ENCODE measurements at regions of chr5 and their contacts with region 1.

Region 1: GRCh38 chr5:172984243-172984953 is 827 bp downstream of the ATP6V0E1 start:
- DNase-seq: peak; percentile 92
- ATAC-seq: peak; percentile 80
- H3K4me3 Mint-ChIP-seq: peak overlapping the region; percentile 91
- H3K27ac Mint-ChIP-seq: peak overlapping the region; percentile 98
- H3K4me1 Mint-ChIP-seq: peaks cover 32% of the 10 kb centered on the region
- H3K27me3 Mint-ChIP-seq: no peaks in the 10 kb centered on the region
- CTCF ChIP-seq: peak; percentile 53

Region 2: DNA sequence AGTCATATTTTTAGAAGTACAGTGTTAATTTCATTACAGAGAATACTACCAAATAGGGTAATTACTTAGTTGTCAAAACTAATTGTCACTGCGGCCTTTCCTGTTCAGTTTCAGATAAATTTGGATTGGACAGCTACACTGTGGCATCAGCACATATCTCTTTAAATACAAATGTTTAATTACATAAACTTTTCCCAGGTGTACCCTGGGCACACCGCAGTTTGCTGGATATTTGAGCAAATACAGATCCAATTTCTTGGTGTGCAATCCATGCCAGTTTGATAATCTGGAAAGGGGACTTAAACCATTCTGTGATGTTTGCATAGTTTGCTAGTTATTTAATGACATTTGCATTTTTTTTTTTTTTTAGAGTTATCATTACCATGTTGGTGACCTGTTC is 10.0 kb after region 1 on chr5:
- CTCF ChIA-PET with region 1: interaction called, 16 read pairs
- POLR2A ChIA-PET with region 1: interaction called, 10 read pairs
- intact Hi-C with region 1: no loop called
- DNase-seq: no peak
- ATAC-seq: no peak
- H3K4me3 Mint-ChIP-seq: no peak overlapping the region
- H3K27ac Mint-ChIP-seq: peak overlapping the region; percentile 67
- H3K4me1 Mint-ChIP-seq: peaks cover 44% of the 10 kb centered on the region
- H3K27me3 Mint-ChIP-seq: no peaks in the 10 kb centered on the region
- CTCF ChIP-seq: no peak

Region 3: GRCh38 chr5:173057062-173057924 is 72.9 kb after region 1 on chr5:
- CTCF ChIA-PET with region 1: interaction called, 37 read pairs
- POLR2A ChIA-PET with region 1: interaction called, 16 read pairs
- intact Hi-C with region 1: loop called (anchors 1 kb)
- DNase-seq: peak; percentile 100
- ATAC-seq: peak; percentile 90
- H3K4me3 Mint-ChIP-seq: peak overlapping the region; percentile 91
- H3K27ac Mint-ChIP-seq: peak overlapping the region; percentile 97
- H3K4me1 Mint-ChIP-seq: peaks cover 47% of the 10 kb centered on the region
- H3K27me3 Mint-ChIP-seq: no peaks in the 10 kb centered on the region
- CTCF ChIP-seq: no peak

Region 4: GRCh38 chr5:173144200-173145176 is 160.1 kb after region 1 on chr5 and contains the start of gene BNIP1:
- CTCF ChIA-PET with region 1: interaction called, 23 read pairs
- POLR2A ChIA-PET with region 1: interaction called, 24 read pairs
- intact Hi-C with region 1: loop called (anchors 2 kb)
- DNase-seq: peak; percentile 98
- ATAC-seq: peak; percentile 94
- H3K4me3 Mint-ChIP-seq: peak within 1 kb of the TSS; percentile 99
- H3K27ac Mint-ChIP-seq: peak within 1 kb of the TSS; percentile 100
- H3K4me1 Mint-ChIP-seq: peaks cover 16% of the 10 kb centered on the region
- H3K27me3 Mint-ChIP-seq: no peaks in the 10 kb centered on the region
- CTCF ChIP-seq: peak; percentile 90
- total RNA-seq, gene BNIP1: 23.5 to 25.2 TPM